ENCODE measurements at regions of chr2 and their contacts with region 1.

Region 1: GRCh38 chr2:63488118-63488713 is 100.1 kb downstream of the WDPCP start:
- DNase-seq: peak; percentile 9
- H3K4me3 Mint-ChIP-seq: no peak overlapping the region
- H3K27ac Mint-ChIP-seq: no peak overlapping the region
- H3K4me1 Mint-ChIP-seq: no peaks in the 10 kb centered on the region
- H3K27me3 Mint-ChIP-seq: no peaks in the 10 kb centered on the region

Region 2: GRCh38 chr2:63056107-63057050 is 431.8 kb before region 1 on chr2:
- CTCF ChIA-PET with region 1: no interaction called
- POLR2A ChIA-PET with region 1: no interaction called
- intact Hi-C with region 1: loop called (anchors 5 kb)
- DNase-seq: peak; percentile 45
- H3K4me3 Mint-ChIP-seq: peak overlapping the region; percentile 30
- H3K27ac Mint-ChIP-seq: no peak overlapping the region
- H3K4me1 Mint-ChIP-seq: peaks cover 63% of the 10 kb centered on the region
- H3K27me3 Mint-ChIP-seq: peaks cover 77% of the 10 kb centered on the region

Region 3: DNA sequence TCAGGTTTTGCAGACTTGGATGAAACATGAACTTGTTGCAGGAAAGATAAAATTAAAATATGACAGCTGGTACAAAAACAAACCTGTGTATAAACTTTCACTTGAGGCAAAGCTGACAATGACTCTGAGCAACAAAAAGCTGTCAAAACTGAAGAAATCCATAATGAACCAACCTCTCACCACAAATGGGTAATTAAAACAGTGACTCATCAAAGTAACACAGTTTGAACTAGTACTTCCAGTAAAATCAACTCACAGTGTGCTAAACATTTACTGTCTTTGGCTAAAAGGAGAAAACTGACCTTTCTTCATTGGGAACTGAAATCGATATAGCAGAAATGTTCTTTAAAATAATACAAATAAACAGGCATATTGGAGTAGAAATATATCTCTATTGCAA is 109.6 kb before region 1 on chr2:
- CTCF ChIA-PET with region 1: no interaction called
- POLR2A ChIA-PET with region 1: no interaction called
- intact Hi-C with region 1: no loop called
- DNase-seq: no peak
- H3K4me3 Mint-ChIP-seq: no peak overlapping the region
- H3K27ac Mint-ChIP-seq: no peak overlapping the region
- H3K4me1 Mint-ChIP-seq: no peaks in the 10 kb centered on the region
- H3K27me3 Mint-ChIP-seq: no peaks in the 10 kb centered on the region

Measured in activated CD4-positive, alpha-beta memory T cell treated with anti-CD3 and anti-CD28 coated beads for 36 hours (primary cell).